KBM-7 (cell line): ENCODE measurements at regions of chr16 and their contacts with region 1.

Region 1: GRCh38 chr16:52383640-52384292 is 163.2 kb downstream of the TOX3 start:
- DNase-seq: no peak

Region 2: GRCh38 chr16:52293204-52293603 is 90.6 kb before region 1 on chr16:
- in situ Hi-C with region 1: no loop called
- DNase-seq: no peak

Region 3: DNA sequence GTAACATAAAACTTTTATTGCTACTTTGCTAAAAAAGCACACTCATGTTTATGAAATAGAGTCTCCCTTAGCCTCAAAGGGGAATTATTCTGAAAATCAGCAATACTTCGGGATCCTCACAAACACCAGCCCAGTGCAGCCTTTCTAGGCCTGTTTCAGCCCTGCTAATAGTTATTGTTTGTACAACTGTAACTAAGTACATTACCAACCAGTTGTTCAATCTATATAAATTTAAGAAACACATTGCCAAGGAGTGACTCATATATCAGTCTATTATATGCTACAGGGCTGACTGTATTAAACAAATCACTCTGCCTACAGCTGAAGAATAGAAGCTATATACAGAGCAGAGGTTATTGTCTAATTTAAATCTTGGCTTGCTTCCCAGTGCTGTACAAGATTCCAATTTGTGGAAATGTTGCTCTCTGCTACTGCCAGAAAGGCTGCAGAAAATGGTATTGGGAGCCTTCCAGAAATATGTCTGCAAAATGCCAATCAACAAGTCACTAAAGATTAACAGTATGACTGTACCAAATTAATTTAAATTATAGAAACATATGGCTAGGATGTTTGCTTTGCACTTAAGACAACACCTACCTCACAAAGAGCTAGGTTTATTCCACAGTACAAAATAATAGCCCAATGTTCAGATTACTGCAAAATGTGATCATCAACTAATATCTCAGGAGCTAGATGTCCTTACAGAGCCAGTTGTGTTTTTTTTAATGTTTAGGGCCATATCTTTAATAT is 113.5 kb after region 1 on chr16:
- in situ Hi-C with region 1: loop called (anchors 25 kb)
- DNase-seq: no peak